CD8-positive, alpha-beta memory T cell (primary cell): ENCODE measurements at regions of chr12 and their contacts with region 1.

Region 1: DNA sequence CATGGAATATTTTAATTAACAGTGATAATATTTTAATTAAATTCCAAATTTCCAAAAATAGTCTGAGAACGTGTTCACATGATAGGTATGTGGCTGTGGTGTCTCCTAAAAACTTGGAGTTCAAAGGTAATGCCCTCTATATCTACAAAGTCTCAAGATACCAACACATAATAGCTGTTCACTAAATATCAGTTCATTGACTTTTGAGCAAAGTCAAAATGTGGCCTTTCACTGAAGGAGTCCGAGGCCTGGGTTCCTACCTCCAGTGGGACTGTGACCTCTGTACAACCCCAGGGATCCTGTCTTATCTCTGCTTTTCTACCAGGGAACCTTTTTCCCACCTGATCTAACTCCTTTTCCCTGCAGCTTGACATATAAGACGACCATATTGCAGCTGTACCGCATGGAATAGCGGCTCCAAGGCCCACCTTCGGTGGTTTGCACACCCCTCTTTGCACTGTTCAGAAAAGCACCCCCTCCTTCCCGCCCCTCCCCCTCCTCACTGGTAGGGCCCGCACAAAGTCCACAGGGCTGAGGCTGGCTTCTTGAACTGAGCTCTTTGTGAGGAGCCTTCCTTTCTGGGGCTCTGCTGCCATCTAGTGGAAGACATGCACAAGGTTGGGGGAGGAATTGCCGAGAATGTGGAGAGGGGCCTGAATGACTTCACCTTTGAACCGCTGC is 3.1 kb downstream of the CCND2 start:
- DNase-seq: peak; percentile 72 to 91 (median 81)
- H3K4me3 ChIP-seq: peak overlapping the region; percentile 2
- H3K4me3 Mint-ChIP-seq: peak overlapping the region; percentile 89 to 99 (median 97)
- H3K27ac ChIP-seq: no peak overlapping the region
- H3K27ac Mint-ChIP-seq: peak overlapping the region; percentile 52 to 100 (median 98)
- H3K4me1 ChIP-seq: peaks cover 59% of the 10 kb centered on the region
- H3K4me1 Mint-ChIP-seq: peaks cover 49 to 73% (median 67%) of the 10 kb centered on the region in 3 donors
- H3K27me3 ChIP-seq: no peaks in the 10 kb centered on the region
- H3K27me3 Mint-ChIP-seq: peaks cover 0 to 5% of the 10 kb centered on the region in 2 donors

Region 2: DNA sequence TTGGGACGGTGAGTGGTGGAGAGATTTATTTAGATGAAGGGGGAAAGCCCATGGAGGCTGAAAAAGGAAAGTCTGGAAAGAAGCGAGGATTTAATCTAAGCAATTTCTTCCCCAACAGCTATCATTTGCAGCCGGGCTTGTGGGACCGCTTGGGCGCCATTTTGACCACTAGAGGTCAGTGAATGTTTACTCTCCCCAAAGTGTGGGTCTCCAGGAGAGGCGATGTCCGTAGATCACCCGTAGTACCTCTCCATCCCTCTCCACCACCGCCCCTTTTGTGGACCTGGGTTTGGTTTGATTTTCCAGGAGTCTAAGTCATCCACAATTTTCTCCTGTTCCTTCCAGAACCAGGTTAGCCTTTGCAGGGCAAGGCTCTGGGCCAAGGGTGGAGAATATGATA is 312.2 kb before region 1 on chr12:
- CTCF ChIA-PET with region 1: interaction called, 20 read pairs
- POLR2A ChIA-PET with region 1: no interaction called
- DNase-seq: no peak
- H3K4me3 ChIP-seq: no peak overlapping the region
- H3K4me3 Mint-ChIP-seq: no peak overlapping the region
- H3K27ac ChIP-seq: no peak overlapping the region
- H3K27ac Mint-ChIP-seq: peak overlapping the region in 2 of 8 donors; percentile 19 to 69
- H3K4me1 ChIP-seq: peaks cover 20% of the 10 kb centered on the region
- H3K4me1 Mint-ChIP-seq: peaks cover 15 to 24% (median 19%) of the 10 kb centered on the region in 3 donors
- H3K27me3 ChIP-seq: no peaks in the 10 kb centered on the region
- H3K27me3 Mint-ChIP-seq: peaks cover 9 to 11% of the 10 kb centered on the region in 2 donors

Region 3: DNA sequence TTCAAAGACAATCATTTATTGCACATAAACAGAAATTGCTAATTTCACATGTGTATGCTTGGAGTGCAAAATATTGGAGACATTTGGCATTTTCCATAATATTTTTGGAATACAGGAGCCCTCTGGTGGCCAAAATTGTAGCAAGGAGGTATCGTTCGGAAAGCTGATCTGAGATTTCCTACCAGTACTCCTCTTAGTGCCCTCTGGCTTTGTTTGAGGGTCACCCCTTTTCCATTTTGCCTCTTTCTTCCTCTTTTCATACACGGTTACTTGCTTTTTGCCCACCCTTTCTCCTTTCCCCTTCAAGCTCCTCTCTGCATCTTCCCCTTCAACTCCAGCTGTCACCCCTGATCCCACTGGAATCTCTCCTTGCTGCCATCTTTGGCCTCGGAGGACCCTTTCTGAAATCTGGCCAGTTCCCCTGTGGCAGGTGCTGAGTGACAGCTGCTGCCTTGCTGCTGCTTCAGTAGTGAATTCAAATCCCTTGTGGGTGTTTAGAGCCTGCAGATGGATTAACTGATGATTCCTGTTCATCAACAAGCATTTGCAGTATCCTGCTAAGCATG is 238.8 kb before region 1 on chr12:
- CTCF ChIA-PET with region 1: interaction called, 44 read pairs
- POLR2A ChIA-PET with region 1: no interaction called
- DNase-seq: peak in 1 of 5 donors; percentile 5
- H3K4me3 ChIP-seq: no peak overlapping the region
- H3K4me3 Mint-ChIP-seq: no peak overlapping the region
- H3K27ac ChIP-seq: no peak overlapping the region
- H3K27ac Mint-ChIP-seq: peak overlapping the region in 1 of 8 donors; percentile 87
- H3K4me1 ChIP-seq: no peaks in the 10 kb centered on the region
- H3K4me1 Mint-ChIP-seq: peaks cover 0 to 2% (median 0%) of the 10 kb centered on the region in 3 donors
- H3K27me3 ChIP-seq: no peaks in the 10 kb centered on the region
- H3K27me3 Mint-ChIP-seq: peaks cover 0 to 5% of the 10 kb centered on the region in 2 donors

Region 4: DNA sequence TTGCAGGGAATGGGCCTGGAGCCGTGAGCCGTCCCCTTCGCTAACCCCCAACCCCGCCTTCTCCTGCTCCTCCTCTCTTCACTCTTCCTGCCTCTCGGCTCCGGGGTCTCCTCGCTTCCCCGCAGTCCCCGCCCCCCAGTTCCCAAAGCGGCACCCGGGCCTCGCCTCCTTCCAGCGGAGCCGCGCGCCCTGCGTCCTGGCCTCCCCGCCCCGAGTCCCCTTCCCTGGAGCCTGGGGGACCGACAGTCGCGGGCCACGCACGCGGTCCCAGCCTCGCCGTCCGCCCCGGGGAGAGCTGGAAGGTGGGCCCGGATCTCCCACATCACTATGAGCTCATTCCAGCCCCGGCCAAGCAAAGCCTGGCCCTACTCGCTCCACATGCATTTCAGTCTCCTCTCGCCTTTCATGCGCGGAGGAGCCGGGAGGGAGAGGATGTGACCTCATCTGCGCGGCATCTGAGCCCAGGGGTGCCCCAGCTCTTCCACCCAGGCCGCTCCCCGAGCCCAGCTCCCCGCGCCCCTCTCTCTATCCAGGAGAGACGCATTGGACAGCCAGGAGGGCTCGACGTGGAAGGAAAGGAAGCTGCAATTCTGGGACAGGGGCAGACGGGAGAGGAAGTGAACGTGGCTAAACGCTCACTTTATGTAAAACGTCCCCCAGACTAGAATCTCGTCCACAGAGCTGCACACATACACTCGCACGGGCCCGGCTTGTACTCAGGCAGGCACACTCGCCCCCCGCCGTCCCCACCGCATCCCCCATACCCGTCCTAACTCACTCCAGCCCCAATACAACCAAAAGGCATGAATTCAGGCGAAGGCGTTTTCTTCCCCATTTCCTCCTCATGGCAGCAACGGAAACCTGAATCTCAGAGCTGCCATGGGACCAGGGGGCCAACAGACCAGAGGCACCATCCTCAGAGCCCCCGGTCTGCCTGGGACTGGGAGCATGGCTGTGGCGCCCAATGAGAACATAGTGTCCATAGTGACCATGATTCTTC is 111.8 kb before region 1 on chr12:
- CTCF ChIA-PET with region 1: interaction called, 13 read pairs
- POLR2A ChIA-PET with region 1: interaction called, 10 read pairs
- DNase-seq: peak; percentile 11 to 67 (median 42)
- H3K4me3 ChIP-seq: peak overlapping the region; percentile 69
- H3K4me3 Mint-ChIP-seq: peak overlapping the region; percentile 83 to 95 (median 89)
- H3K27ac ChIP-seq: no peak overlapping the region
- H3K27ac Mint-ChIP-seq: peak overlapping the region; percentile 44 to 92 (median 86)
- H3K4me1 ChIP-seq: peaks cover 11% of the 10 kb centered on the region
- H3K4me1 Mint-ChIP-seq: peaks cover 13 to 23% (median 16%) of the 10 kb centered on the region in 3 donors
- H3K27me3 ChIP-seq: no peaks in the 10 kb centered on the region
- H3K27me3 Mint-ChIP-seq: peaks cover 0 to 2% of the 10 kb centered on the region in 2 donors

Region 5: DNA sequence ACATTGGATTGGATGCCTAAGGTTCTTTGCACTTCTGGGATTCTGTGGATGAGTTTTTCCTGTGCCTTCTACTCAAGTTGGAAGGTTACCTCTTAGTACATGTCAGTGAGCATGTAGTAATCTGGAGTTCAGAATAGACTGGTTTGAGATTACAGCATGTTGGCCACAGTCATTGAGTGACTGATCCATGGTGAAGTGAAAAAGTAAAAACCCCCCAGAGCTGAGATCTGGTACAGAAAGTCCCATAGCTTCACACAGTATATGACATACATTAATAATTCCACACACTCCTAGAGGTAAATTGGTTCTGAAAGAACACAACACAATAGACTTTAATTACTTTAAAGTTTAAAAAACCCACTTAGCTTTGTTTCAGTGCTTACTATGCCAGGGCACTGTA is 15.0 kb before region 1 on chr12:
- CTCF ChIA-PET with region 1: interaction called, 15 read pairs
- POLR2A ChIA-PET with region 1: interaction called, 3 read pairs
- DNase-seq: no peak
- H3K4me3 ChIP-seq: no peak overlapping the region
- H3K4me3 Mint-ChIP-seq: no peak overlapping the region
- H3K27ac ChIP-seq: no peak overlapping the region
- H3K27ac Mint-ChIP-seq: no peak overlapping the region
- H3K4me1 ChIP-seq: no peaks in the 10 kb centered on the region
- H3K4me1 Mint-ChIP-seq: no peaks in the 10 kb centered on the region
- H3K27me3 ChIP-seq: no peaks in the 10 kb centered on the region
- H3K27me3 Mint-ChIP-seq: peaks cover 0 to 3% of the 10 kb centered on the region in 2 donors